Panc1 (cell line): ENCODE measurements at regions of chr11 and their contacts with region 1.

Region 1: DNA sequence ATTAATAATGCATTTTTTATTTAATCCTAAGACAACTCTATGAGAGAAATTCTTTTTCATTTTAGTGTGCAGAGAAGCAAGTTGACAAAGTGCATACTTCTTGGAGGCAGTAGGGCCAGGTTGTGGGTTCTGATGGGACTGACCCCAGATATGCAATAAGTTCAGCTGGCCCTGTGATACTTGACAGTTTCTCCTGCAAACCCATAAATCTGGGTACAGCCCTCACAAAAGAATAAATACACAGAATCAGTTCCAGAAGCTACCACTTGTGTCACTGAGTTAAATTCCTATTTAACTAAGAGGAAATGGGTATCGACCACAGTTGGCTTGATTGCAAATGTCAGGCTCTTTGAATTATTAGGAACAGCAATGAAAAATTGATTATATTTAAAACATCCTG is 598.5 kb upstream of the API5 start:
- DNase-seq: no peak
- ATAC-seq: no peak
- H3K4me3 ChIP-seq: no peak overlapping the region
- H3K27ac ChIP-seq: no peak overlapping the region
- H3K4me1 ChIP-seq: no peaks in the 10 kb centered on the region
- H3K27me3 ChIP-seq: no peaks in the 10 kb centered on the region
- CTCF ChIP-seq: no peak

Region 2: GRCh38 chr11:42727879-42728278 is 14.6 kb after region 1 on chr11:
- CTCF ChIA-PET with region 1: no interaction called
- POLR2A ChIA-PET with region 1: no interaction called
- in situ Hi-C with region 1: no loop called
- intact Hi-C with region 1: no loop called
- DNase-seq: no peak
- ATAC-seq: no peak
- H3K4me3 ChIP-seq: no peak overlapping the region
- H3K27ac ChIP-seq: no peak overlapping the region
- H3K4me1 ChIP-seq: no peaks in the 10 kb centered on the region
- H3K27me3 ChIP-seq: no peaks in the 10 kb centered on the region
- CTCF ChIP-seq: no peak

Region 3: GRCh38 chr11:43267856-43268580 is 554.7 kb after region 1 on chr11:
- CTCF ChIA-PET with region 1: no interaction called
- POLR2A ChIA-PET with region 1: interaction called, 12 read pairs
- in situ Hi-C with region 1: no loop called
- intact Hi-C with region 1: no loop called
- DNase-seq: no peak
- ATAC-seq: no peak
- H3K4me3 ChIP-seq: no peak overlapping the region
- H3K27ac ChIP-seq: no peak overlapping the region
- H3K4me1 ChIP-seq: no peaks in the 10 kb centered on the region
- H3K27me3 ChIP-seq: no peaks in the 10 kb centered on the region
- CTCF ChIP-seq: no peak